ENCODE measurements at regions of chr11 and their contacts with region 1.

Region 1: DNA sequence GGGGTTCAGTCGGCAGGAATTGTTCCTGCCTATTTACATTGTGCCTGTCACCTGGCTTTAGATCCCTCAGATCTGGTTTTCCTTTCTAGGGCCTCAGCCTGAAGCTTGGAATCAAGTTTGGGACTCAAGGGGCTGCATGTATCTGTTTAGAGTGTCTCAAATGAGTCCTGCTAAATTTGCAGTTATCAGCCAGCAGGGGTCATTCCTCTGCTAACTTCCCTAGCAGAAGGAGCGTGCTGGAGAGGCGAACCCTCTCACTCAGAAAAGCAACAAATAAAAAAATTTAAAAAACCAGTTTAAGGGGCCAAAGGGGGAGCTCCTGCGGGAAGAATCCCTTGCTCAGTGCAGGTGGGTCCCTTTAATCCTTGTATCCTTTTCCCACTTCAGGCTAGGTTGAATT is 1220.2 kb downstream of the JRKL start:
- DNase-seq: no peak
- H3K4me3 Mint-ChIP-seq: no peak overlapping the region
- H3K27ac Mint-ChIP-seq: no peak overlapping the region
- H3K4me1 Mint-ChIP-seq: no peaks in the 10 kb centered on the region
- H3K27me3 Mint-ChIP-seq: no peaks in the 10 kb centered on the region

Region 2: GRCh38 chr11:97557399-97557798 is 52.6 kb before region 1 on chr11:
- CTCF ChIA-PET with region 1: no interaction called
- intact Hi-C with region 1: loop called (anchors 10 kb)
- DNase-seq: no peak
- H3K4me3 Mint-ChIP-seq: no peak overlapping the region
- H3K27ac Mint-ChIP-seq: no peak overlapping the region
- H3K4me1 Mint-ChIP-seq: no peaks in the 10 kb centered on the region
- H3K27me3 Mint-ChIP-seq: no peaks in the 10 kb centered on the region

Region 3: GRCh38 chr11:98143661-98144060 is 533.7 kb after region 1 on chr11:
- CTCF ChIA-PET with region 1: no interaction called
- intact Hi-C with region 1: no loop called
- DNase-seq: no peak
- H3K4me3 Mint-ChIP-seq: no peak overlapping the region
- H3K27ac Mint-ChIP-seq: no peak overlapping the region
- H3K4me1 Mint-ChIP-seq: no peaks in the 10 kb centered on the region
- H3K27me3 Mint-ChIP-seq: no peaks in the 10 kb centered on the region